ENCODE measurements at regions of chr5 and their contacts with region 1.

Region 1: DNA sequence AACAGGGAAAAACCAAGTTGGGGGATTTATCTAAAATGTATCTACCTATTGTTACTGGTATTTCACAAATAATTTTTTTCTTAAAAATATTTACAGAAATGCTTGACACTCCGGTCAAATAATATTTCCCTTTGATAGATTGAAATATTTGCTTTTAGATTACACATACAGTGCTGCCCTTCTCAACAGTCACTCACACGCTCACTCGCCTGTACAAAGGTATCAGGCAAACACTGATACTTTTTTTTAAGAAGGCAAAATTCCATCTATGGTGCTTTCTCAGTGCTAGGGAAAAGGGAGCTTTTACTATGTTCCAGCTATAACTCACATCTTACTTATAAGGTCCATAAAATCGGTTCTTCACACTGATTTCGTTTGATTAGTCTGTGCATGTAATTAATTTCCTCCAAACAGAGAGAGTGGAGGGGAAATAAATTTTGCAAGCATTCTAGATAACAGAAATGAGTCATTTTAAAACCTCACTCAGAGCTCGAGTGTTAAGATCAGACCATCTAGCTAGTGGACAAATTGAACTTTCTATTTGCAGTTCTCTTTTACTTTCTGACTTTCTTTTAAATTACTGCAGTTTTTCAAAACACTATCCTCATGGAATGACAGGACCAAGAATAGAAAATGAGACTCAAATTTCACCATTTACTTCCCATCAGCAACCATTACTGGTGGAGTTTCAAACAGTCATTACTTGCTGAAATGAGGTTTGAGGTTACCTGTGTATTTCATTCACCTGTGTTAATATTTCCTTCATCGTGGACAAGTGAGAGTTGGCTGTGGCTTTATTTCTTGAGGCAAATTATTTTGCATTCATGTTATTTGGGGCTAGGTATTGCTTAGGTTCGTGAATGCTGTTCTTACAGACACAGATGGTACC is 273.2 kb downstream of the RAB3C start:
- DNase-seq: no peak
- ATAC-seq: no peak
- H3K4me3 ChIP-seq: no peak overlapping the region
- H3K27ac ChIP-seq: no peak overlapping the region
- H3K4me1 ChIP-seq: peaks cover 8% of the 10 kb centered on the region; the same call in 2 of the 3 replicates
- CTCF ChIP-seq: no peak
- EP300 ChIP-seq: no peak
- POLR2A ChIP-seq: no peak
- RAD21 ChIP-seq: no peak

Region 2: DNA sequence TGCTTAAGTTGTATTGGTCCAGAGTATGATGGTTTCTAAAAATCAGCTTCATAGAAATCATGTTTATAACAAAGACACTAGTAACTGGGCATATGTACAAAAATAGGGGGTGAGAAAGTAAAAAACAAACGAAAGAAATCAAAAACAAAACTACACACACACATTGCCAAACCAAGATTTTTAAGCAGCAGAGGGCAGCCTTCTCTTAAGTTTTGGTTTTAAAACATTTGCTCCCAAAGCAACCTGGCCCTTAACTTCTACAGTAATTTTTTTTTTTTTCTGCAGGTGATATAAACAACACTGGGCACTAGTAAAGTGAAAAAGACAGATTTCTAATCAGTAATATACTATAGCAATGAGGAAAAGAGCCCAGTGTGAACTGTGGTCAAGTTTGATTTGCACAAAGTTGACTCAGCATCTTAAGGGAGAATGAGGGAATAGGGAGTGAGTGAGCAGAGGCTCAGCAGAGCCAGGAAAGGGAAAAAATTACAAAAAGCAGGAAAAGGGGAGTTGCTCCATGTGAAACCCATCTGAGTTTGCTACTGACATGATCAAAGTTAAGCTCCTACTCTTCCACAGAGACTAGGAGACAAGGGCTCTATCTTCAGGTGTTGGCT is 378.2 kb before region 1 on chr5:
- CTCF ChIA-PET with region 1: interaction called, 30 read pairs
- POLR2A ChIA-PET with region 1: no interaction called
- DNase-seq: no peak
- ATAC-seq: peak in 1 of 2 experiments; percentile 61; a peak in 3 of 6 replicates
- H3K4me3 ChIP-seq: no peak overlapping the region
- H3K27ac ChIP-seq: no peak overlapping the region
- H3K4me1 ChIP-seq: 0 out of 3 replicates have a peak, but pooled peaks cover 3% of the 10 kb centered on the region
- CTCF ChIP-seq: peak; percentile 70
- EP300 ChIP-seq: no peak
- POLR2A ChIP-seq: no peak
- RAD21 ChIP-seq: peak; percentile 68 to 75

Region 3: GRCh38 chr5:58571501-58571900 is 284.6 kb before region 1 on chr5:
- CTCF ChIA-PET with region 1: no interaction called
- POLR2A ChIA-PET with region 1: no interaction called
- DNase-seq: no peak
- ATAC-seq: no peak
- H3K4me3 ChIP-seq: no peak overlapping the region
- H3K27ac ChIP-seq: no peak overlapping the region
- H3K4me1 ChIP-seq: no peaks in the 10 kb centered on the region
- CTCF ChIP-seq: no peak
- EP300 ChIP-seq: no peak
- POLR2A ChIP-seq: no peak
- RAD21 ChIP-seq: no peak

Region 4: DNA sequence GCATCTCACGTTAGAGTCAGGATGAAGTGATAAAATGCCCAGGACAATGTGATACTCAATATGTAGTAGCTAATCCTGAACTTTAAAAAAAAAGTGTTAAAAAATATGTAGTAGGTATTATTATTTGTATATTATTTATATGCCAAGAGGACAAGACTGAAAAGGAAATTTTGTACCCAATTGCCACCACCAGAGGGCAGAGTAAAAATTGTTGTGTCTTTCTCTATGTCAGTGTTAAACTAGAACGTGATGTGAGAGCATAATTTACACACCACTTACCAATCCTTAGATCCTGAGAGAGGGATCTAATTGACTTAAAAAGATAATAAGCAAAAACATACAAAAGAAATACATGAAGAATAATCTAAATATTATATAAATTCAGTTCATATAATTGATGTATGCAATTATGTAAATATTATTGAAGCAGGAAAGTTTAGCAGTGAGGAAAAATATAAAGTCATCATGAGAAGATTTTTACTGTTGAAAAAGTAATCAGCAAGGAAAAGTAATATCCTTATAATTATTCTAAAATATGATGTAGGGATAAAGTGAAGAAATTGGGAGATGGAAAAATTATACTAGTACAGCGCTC is 15.7 kb after region 1 on chr5:
- CTCF ChIA-PET with region 1: interaction called, 11 read pairs
- POLR2A ChIA-PET with region 1: no interaction called
- DNase-seq: peak; percentile 44 to 69
- ATAC-seq: peak in 1 of 2 experiments; percentile 80; a peak in 3 of 6 replicates
- H3K4me3 ChIP-seq: no peak overlapping the region
- H3K27ac ChIP-seq: peak overlapping the region in 1 of 2 experiments; percentile 17; a peak in 1 of 6 replicates
- H3K4me1 ChIP-seq: no peaks in the 10 kb centered on the region
- CTCF ChIP-seq: peak; percentile 74
- EP300 ChIP-seq: no peak
- POLR2A ChIP-seq: no peak
- RAD21 ChIP-seq: peak; percentile 52 to 60; a peak in 4 of 5 replicates

Measured in A549 (cell line).